CD8-positive, alpha-beta memory T cell (primary cell): ENCODE measurements at regions of chr16 and their contacts with region 1.

Region 1: GRCh38 chr16:50665128-50665878 is 15.8 kb downstream of the SNX20 start:
- DNase-seq: peak; percentile 73 to 84 (median 76)
- H3K4me3 ChIP-seq: peak overlapping the region; percentile 76
- H3K4me3 Mint-ChIP-seq: peak overlapping the region; percentile 69 to 93 (median 84)
- H3K27ac ChIP-seq: peak overlapping the region; percentile 18
- H3K27ac Mint-ChIP-seq: peak overlapping the region in 7 of 8 donors; percentile 61 to 97 (median 83)
- H3K4me1 ChIP-seq: peaks cover 30% of the 10 kb centered on the region
- H3K4me1 Mint-ChIP-seq: peaks cover 29 to 43% (median 38%) of the 10 kb centered on the region in 3 donors
- H3K27me3 ChIP-seq: no peaks in the 10 kb centered on the region
- H3K27me3 Mint-ChIP-seq: no peaks in the 10 kb centered on the region

Region 2: GRCh38 chr16:50281964-50282538 is 383.3 kb before region 1 on chr16:
- CTCF ChIA-PET with region 1: interaction called, 10 read pairs
- POLR2A ChIA-PET with region 1: no interaction called
- DNase-seq: peak; percentile 45 to 80 (median 59)
- H3K4me3 ChIP-seq: peak overlapping the region; percentile 53
- H3K4me3 Mint-ChIP-seq: peak overlapping the region; percentile 71 to 85 (median 82)
- H3K27ac ChIP-seq: peak overlapping the region; percentile 57
- H3K27ac Mint-ChIP-seq: peak overlapping the region; percentile 84 to 99 (median 93)
- H3K4me1 ChIP-seq: peaks cover 90% of the 10 kb centered on the region
- H3K4me1 Mint-ChIP-seq: peaks cover 87 to 96% (median 93%) of the 10 kb centered on the region in 3 donors
- H3K27me3 ChIP-seq: no peaks in the 10 kb centered on the region
- H3K27me3 Mint-ChIP-seq: no peaks in the 10 kb centered on the region

Region 3: GRCh38 chr16:50360033-50360778 is 305.1 kb before region 1 on chr16:
- CTCF ChIA-PET with region 1: interaction called, 27 read pairs
- POLR2A ChIA-PET with region 1: no interaction called
- DNase-seq: no peak
- H3K4me3 ChIP-seq: no peak overlapping the region
- H3K4me3 Mint-ChIP-seq: no peak overlapping the region
- H3K27ac ChIP-seq: no peak overlapping the region
- H3K27ac Mint-ChIP-seq: peak overlapping the region; percentile 53 to 84 (median 76)
- H3K4me1 ChIP-seq: peaks cover 36% of the 10 kb centered on the region
- H3K4me1 Mint-ChIP-seq: peaks cover 45 to 73% (median 71%) of the 10 kb centered on the region in 3 donors
- H3K27me3 ChIP-seq: no peaks in the 10 kb centered on the region
- H3K27me3 Mint-ChIP-seq: no peaks in the 10 kb centered on the region

Region 4: DNA sequence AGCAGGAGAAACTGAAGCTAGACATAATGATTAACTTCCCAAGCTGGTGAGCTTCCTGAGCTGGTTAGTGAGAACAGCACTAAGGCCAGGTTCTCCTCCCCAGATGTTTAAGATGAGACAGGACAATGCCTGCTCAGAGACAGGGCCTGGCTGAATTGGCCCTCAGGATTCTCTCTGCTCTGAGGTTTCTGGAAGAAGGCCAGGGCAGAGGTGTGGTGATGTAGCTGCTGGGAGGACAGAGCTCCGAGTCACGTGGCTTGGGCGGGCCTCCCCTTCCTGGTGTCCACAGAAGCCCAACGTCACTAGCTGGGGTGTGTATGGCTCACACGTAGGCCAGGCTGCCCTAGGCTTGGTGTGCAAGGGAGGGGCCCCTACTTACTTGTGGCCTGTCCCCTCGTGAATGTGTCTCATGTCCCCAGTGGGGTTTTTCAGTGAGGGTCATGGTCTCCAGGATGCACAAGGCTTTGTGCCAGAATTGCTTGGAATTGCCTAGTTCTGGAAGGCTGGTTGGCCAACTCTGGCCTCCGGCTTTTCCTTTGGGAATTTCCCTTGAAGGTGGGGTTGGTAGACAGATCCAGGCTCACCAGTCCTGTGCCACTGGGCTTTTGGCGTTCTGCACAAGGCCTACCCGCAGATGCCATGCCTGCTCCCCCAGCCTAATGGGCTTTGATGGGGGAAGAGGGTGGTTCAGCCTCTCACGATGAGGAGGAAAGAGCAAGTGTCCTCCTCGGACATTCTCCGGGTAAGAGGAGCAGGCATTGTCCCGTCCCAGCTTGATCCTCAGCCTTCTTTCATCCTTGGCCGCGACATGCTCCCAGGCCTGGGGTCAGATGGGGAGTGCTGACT is 31.5 kb after region 1 on chr16:
- CTCF ChIA-PET with region 1: interaction called, 51 read pairs
- POLR2A ChIA-PET with region 1: no interaction called
- DNase-seq: peak in 4 of 5 donors; percentile 30 to 81 (median 52)
- H3K4me3 ChIP-seq: peak overlapping the region; percentile 1
- H3K4me3 Mint-ChIP-seq: peak overlapping the region; percentile 86 to 95 (median 93)
- H3K27ac ChIP-seq: peak overlapping the region; percentile 78
- H3K27ac Mint-ChIP-seq: peak overlapping the region; percentile 94 to 99 (median 98)
- H3K4me1 ChIP-seq: peaks cover 57% of the 10 kb centered on the region
- H3K4me1 Mint-ChIP-seq: peaks cover 58 to 75% (median 71%) of the 10 kb centered on the region in 3 donors
- H3K27me3 ChIP-seq: no peaks in the 10 kb centered on the region
- H3K27me3 Mint-ChIP-seq: peaks cover 0 to 3% of the 10 kb centered on the region in 2 donors

Region 5: GRCh38 chr16:50747207-50747956 is 82.1 kb after region 1 on chr16:
- CTCF ChIA-PET with region 1: interaction called, 39 read pairs
- POLR2A ChIA-PET with region 1: interaction called, 3 read pairs
- DNase-seq: peak in 2 of 5 donors; percentile 59 to 72
- H3K4me3 ChIP-seq: peak overlapping the region; percentile 49
- H3K4me3 Mint-ChIP-seq: peak overlapping the region; percentile 80 to 99 (median 96)
- H3K27ac ChIP-seq: peak overlapping the region; percentile 22
- H3K27ac Mint-ChIP-seq: peak overlapping the region; percentile 34 to 99 (median 94)
- H3K4me1 ChIP-seq: peaks cover 70% of the 10 kb centered on the region
- H3K4me1 Mint-ChIP-seq: peaks cover 62 to 87% (median 82%) of the 10 kb centered on the region in 3 donors
- H3K27me3 ChIP-seq: no peaks in the 10 kb centered on the region
- H3K27me3 Mint-ChIP-seq: peaks cover 0 to 3% of the 10 kb centered on the region in 2 donors